ENCODE measurements at regions of chr5 and their contacts with region 1.

Region 1: DNA sequence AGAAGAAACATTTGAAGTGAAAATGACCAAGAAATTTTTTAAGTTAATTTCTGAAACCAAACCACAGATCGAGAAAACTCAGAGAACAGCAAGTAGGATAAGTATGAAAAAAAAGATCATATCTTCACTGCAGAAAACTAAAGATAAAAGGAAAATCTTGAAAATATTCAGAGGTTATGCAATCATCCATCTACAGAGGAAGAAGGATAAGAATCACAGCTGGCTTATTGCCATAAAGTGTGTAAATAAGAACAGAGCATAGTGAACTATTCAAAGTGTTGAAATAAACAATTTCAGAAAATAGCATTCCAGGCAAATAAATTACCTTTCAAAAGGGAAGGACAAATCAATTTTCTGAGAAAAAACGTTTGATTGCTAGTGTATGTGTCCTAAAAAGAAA is 1191.7 kb upstream of the CDH6 start:
- DNase-seq: no peak
- ATAC-seq: no peak
- H3K4me3 ChIP-seq: no peak overlapping the region
- H3K4me3 Mint-ChIP-seq: no peak overlapping the region
- H3K27ac ChIP-seq: no peak overlapping the region
- H3K27ac Mint-ChIP-seq: no peak overlapping the region
- H3K4me1 ChIP-seq: no peaks in the 10 kb centered on the region
- H3K4me1 Mint-ChIP-seq: no peaks in the 10 kb centered on the region
- H3K27me3 ChIP-seq: no peaks in the 10 kb centered on the region
- H3K27me3 Mint-ChIP-seq: no peaks in the 10 kb centered on the region
- CTCF ChIP-seq: no peak

Region 2: GRCh38 chr5:30063503-30063902 is 61.7 kb after region 1 on chr5:
- CTCF ChIA-PET with region 1: no interaction called
- POLR2A ChIA-PET with region 1: no interaction called
- intact Hi-C with region 1: loop called in 1 of 2 experiments (anchors 2 kb)
- DNase-seq: no peak
- ATAC-seq: no peak
- H3K4me3 ChIP-seq: no peak overlapping the region
- H3K4me3 Mint-ChIP-seq: no peak overlapping the region
- H3K27ac ChIP-seq: no peak overlapping the region
- H3K27ac Mint-ChIP-seq: no peak overlapping the region
- H3K4me1 ChIP-seq: no peaks in the 10 kb centered on the region
- H3K4me1 Mint-ChIP-seq: no peaks in the 10 kb centered on the region
- H3K27me3 ChIP-seq: no peaks in the 10 kb centered on the region
- H3K27me3 Mint-ChIP-seq: no peaks in the 10 kb centered on the region
- CTCF ChIP-seq: no peak

Measured in CD8-positive, alpha-beta T cell (primary cell).